Panc1 (cell line): ENCODE measurements at regions of chr10 and their contacts with region 1.

Region 1: GRCh38 chr10:124539935-124540641 is 78.5 kb downstream of the LHPP start:
- DNase-seq: no peak
- ATAC-seq: peak; percentile 75
- H3K4me3 ChIP-seq: no peak overlapping the region
- H3K27ac ChIP-seq: no peak overlapping the region
- H3K4me1 ChIP-seq: no peaks in the 10 kb centered on the region
- H3K27me3 ChIP-seq: no peaks in the 10 kb centered on the region
- CTCF ChIP-seq: peak; percentile 96

Region 2: DNA sequence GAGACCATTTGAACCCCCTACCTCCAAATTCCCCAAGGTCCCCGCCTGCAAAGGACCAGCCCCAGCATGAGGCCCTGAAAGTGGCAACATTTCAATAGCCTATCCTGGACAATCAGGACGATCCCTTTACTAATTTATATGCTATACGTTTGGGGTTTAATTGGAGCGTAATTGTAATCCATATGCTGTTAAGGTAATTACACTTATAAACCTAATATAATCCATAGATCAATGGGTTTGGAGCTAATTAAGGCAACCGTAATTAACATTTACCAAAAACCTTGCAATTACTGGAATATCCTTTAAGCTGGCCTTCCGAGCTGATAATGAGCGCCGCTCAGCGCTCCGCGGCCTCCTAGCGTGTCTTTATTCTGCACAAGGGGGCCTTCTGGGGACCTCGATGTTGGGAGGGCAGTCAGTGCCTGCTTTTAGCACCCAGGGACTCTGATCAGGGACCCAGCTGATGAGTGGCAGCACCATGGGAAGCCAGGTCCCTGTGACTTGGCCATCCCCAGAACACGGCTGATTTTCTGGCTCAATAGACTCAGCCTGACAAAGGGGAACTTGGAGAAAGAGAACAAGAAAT is 12.7 kb after region 1 on chr10:
- CTCF ChIA-PET with region 1: interaction called, 3 read pairs
- POLR2A ChIA-PET with region 1: interaction called, 13 read pairs
- in situ Hi-C with region 1: no loop called
- intact Hi-C with region 1: no loop called
- DNase-seq: no peak
- ATAC-seq: no peak
- H3K4me3 ChIP-seq: no peak overlapping the region
- H3K27ac ChIP-seq: no peak overlapping the region
- H3K4me1 ChIP-seq: 0 out of 2 replicates have a peak, but pooled peaks cover 3% of the 10 kb centered on the region
- H3K27me3 ChIP-seq: no peaks in the 10 kb centered on the region
- CTCF ChIP-seq: no peak

Region 3: GRCh38 chr10:124741281-124741921 is 201.3 kb after region 1 on chr10:
- CTCF ChIA-PET with region 1: interaction called, 9 read pairs
- POLR2A ChIA-PET with region 1: interaction called, 5 read pairs
- in situ Hi-C with region 1: no loop called
- intact Hi-C with region 1: loop called (anchors 2 kb)
- DNase-seq: no peak
- ATAC-seq: peak; percentile 66
- H3K4me3 ChIP-seq: peak overlapping the region; percentile 33 to 77
- H3K27ac ChIP-seq: peak overlapping the region; percentile 86
- H3K4me1 ChIP-seq: peaks cover 76% of the 10 kb centered on the region
- H3K27me3 ChIP-seq: no peaks in the 10 kb centered on the region
- CTCF ChIP-seq: peak; percentile 99

Region 4: DNA sequence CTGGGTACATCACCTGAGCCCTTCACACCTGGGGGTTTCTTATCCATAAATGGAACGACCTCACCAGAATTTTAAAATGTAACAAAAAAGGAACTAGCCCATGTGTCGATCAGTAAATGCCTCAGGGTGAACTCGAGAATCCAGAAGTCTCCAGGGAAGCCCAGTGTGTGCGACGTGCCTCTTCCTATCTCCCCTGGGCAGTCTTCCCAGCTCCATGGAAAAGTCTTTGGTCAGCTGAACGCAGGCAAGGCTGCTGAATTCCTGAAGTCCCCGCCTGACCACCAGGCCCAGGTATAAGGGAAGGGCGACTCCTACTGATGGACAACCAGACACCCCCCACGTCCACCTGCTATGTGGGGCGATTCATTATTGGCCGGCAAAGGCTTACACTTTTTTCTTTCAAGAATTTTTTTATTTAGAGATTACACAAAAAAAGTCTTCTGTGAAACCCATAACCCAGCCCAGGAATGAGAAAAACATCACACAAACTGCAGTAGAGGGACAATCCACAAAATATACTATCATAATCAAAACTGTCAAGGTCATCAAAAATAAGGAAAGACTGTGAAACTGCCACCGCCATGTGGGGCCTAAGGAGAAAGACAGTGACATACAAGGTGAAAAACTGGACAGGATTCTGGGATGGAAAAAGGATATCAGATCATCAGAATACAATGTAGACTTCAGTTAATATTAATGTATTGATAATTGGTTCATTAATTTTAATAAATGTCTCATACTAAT is 526.8 kb after region 1 on chr10:
- CTCF ChIA-PET with region 1: no interaction called
- POLR2A ChIA-PET with region 1: no interaction called
- in situ Hi-C with region 1: no loop called
- intact Hi-C with region 1: no loop called
- DNase-seq: no peak
- ATAC-seq: no peak
- H3K4me3 ChIP-seq: no peak overlapping the region
- H3K27ac ChIP-seq: no peak overlapping the region
- H3K4me1 ChIP-seq: peaks cover 19% of the 10 kb centered on the region
- H3K27me3 ChIP-seq: no peaks in the 10 kb centered on the region
- CTCF ChIP-seq: no peak